ENCODE measurements at regions of chr10 and their contacts with region 1.

Region 1: DNA sequence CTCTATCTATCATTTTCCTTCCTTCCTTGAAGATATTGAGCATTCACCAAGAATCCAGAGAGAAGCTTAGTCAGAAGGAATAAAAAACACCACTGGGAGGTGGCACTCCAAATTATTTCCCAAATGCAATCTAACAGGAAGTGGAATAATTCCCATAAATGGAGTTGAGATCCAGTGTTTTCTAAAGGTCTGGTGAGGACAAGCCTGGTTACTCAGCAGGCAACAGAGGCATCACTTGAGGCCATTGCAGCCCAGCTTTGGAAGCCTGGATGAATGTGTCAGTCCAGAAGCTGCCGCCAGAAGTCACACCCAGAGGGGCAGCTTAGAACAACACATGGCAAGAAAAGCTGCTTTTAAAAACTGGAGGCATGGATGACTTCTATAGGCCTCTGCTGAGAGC is 288.9 kb upstream of the KLF6 start:
- DNase-seq: peak in 1 of 2 donors; percentile 87
- H3K4me3 ChIP-seq: no peak overlapping the region
- H3K27ac ChIP-seq: peak overlapping the region; percentile 64 to 78
- H3K4me1 ChIP-seq: peaks cover 8 to 42% of the 10 kb centered on the region in 2 donors
- H3K27me3 ChIP-seq: no peaks in the 10 kb centered on the region
- CTCF ChIP-seq: no peak

Region 2: DNA sequence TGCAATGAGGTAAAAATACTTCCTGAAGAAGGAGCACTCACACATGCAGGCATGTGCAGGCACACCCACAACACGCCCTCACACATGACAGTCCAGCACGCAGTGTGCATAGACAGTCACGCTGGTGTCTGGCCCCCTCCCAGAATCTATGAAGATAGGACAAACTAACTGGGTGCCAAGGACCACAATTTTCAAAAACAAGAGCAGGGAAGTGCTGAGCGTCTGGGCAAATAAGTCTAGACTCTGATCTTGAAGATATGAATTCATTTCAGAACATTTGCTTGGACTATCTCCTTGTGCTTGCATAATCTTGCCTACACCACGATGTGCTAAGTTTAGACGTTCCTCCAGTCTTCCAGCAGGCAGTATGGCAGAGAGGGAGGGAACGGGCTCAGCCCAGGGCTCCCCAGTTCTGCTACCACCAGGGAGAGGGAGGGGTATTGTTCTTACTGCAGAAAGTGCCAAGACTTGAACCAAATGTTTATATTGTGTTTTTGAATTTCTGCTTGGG is 12.4 kb before region 1 on chr10:
- intact Hi-C with region 1: loop called (anchors 1 kb)
- DNase-seq: peak; percentile 51 to 92
- H3K4me3 ChIP-seq: peak overlapping the region in 1 of 2 donors; percentile 1
- H3K27ac ChIP-seq: peak overlapping the region; percentile 60 to 71
- H3K4me1 ChIP-seq: peaks cover 5 to 45% of the 10 kb centered on the region in 2 donors
- H3K27me3 ChIP-seq: no peaks in the 10 kb centered on the region
- CTCF ChIP-seq: no peak

Region 3: GRCh38 chr10:4120096-4120853 is 46.4 kb after region 1 on chr10:
- intact Hi-C with region 1: no loop called
- DNase-seq: no peak
- H3K4me3 ChIP-seq: no peak overlapping the region
- H3K27ac ChIP-seq: no peak overlapping the region
- H3K4me1 ChIP-seq: no peaks in the 10 kb centered on the region
- H3K27me3 ChIP-seq: no peaks in the 10 kb centered on the region
- CTCF ChIP-seq: no peak

Region 4: DNA sequence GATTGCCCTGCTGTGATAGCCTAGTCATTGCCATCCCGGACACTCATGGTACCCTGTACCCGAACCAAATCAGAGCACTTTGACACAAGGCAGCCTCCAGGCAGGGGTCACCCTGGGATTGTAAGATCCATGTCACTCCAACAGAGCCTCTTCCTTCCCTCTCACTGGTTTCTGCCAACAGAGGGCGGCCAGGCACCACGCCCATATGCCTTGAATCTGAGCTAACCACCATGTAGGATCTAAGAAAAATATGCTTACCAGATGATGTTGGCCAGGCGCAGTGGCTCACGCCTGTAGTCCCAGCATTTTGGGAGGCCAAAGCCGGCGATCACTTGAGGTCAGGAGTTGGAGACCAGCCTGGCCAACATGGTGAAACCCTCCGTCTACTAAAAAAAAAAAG is 100.3 kb after region 1 on chr10:
- intact Hi-C with region 1: no loop called
- DNase-seq: no peak
- H3K4me3 ChIP-seq: no peak overlapping the region
- H3K27ac ChIP-seq: no peak overlapping the region
- H3K4me1 ChIP-seq: peaks cover 0 to 2% of the 10 kb centered on the region in 2 donors
- H3K27me3 ChIP-seq: no peaks in the 10 kb centered on the region
- CTCF ChIP-seq: no peak

Region 5: GRCh38 chr10:4391683-4392082 is 317.8 kb after region 1 on chr10:
- intact Hi-C with region 1: no loop called
- DNase-seq: no peak
- H3K4me3 ChIP-seq: no peak overlapping the region
- H3K27ac ChIP-seq: no peak overlapping the region
- H3K4me1 ChIP-seq: no peaks in the 10 kb centered on the region
- H3K27me3 ChIP-seq: no peaks in the 10 kb centered on the region
- CTCF ChIP-seq: no peak

Region 6: DNA sequence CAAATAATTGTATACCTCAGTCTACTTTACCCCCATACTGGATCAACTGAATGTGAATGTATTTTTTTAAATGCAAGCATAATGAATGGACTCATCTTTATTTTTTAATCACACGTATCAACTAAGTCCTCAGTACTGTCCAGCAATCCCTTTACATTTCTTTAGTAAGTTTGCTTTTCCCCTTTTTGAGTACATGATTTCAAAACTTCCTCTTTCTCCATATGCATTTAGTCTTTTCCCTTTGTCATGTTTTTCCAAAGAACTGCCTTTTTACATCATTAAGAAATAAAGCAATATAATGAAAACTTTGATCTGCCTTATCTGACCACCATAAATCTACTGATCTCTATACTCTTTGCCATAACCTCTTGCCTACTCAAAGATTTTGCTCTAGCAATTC is 569.6 kb after region 1 on chr10:
- intact Hi-C with region 1: no loop called
- DNase-seq: no peak
- H3K4me3 ChIP-seq: no peak overlapping the region
- H3K27ac ChIP-seq: no peak overlapping the region
- H3K4me1 ChIP-seq: peaks cover 10 to 40% of the 10 kb centered on the region in 2 donors
- H3K27me3 ChIP-seq: no peaks in the 10 kb centered on the region
- CTCF ChIP-seq: no peak